HEK293 (cell line): ENCODE measurements at regions of chr9 and their contacts with region 1.

Region 1: GRCh38 chr9:70111042-70111602 is 67.5 kb downstream of the MAMDC2 start:
- H3K4me3 ChIP-seq: no peak overlapping the region
- H3K27ac ChIP-seq: no peak overlapping the region
- H3K4me1 ChIP-seq: no peaks in the 10 kb centered on the region
- CTCF ChIP-seq: peak; percentile 48; the same call in 1 of the 2 replicates

Region 2: DNA sequence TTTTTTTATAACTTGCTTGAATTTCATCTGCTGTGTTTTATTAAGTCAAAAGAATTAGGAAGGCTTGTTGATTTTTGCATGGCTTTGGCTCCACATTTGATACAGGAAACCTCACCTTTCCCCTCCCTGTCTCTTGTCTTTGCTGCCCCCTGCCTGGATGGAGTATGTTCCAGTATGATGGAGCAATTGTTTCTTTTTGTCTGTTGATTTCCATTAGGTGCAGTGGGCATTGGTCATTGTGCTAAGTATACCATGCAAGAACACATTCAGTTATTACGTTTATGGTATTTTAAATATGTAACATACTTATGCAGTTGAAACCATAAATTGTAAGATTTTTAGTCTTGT is 917.5 kb before region 1 on chr9:
- CTCF ChIA-PET with region 1: no interaction called
- POLR2A ChIA-PET with region 1: no interaction called
- H3K4me3 ChIP-seq: no peak overlapping the region
- H3K27ac ChIP-seq: no peak overlapping the region
- H3K4me1 ChIP-seq: no peaks in the 10 kb centered on the region
- CTCF ChIP-seq: no peak

Region 3: DNA sequence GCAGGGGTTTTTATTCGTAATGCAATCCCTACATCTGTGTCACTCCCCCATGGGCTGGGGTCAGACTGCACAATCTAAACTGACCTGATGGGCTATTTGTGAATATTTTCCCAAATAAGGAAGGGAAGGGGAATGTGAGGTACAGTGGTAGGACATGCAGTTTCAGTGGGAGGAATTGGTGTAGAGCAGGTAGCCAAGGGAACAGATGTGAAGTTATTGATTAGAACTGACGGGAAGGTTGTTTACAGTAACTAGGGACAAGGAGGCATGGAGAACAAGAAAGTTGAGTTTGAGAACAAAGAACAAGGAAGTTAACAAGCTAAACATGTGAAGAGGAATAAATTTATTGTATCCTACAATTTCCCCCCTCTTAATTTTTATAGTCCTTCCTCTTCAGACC is 185.7 kb before region 1 on chr9:
- CTCF ChIA-PET with region 1: interaction called, 22 read pairs
- POLR2A ChIA-PET with region 1: no interaction called
- H3K4me3 ChIP-seq: no peak overlapping the region
- H3K27ac ChIP-seq: no peak overlapping the region
- H3K4me1 ChIP-seq: no peaks in the 10 kb centered on the region
- CTCF ChIP-seq: no peak

Region 4: DNA sequence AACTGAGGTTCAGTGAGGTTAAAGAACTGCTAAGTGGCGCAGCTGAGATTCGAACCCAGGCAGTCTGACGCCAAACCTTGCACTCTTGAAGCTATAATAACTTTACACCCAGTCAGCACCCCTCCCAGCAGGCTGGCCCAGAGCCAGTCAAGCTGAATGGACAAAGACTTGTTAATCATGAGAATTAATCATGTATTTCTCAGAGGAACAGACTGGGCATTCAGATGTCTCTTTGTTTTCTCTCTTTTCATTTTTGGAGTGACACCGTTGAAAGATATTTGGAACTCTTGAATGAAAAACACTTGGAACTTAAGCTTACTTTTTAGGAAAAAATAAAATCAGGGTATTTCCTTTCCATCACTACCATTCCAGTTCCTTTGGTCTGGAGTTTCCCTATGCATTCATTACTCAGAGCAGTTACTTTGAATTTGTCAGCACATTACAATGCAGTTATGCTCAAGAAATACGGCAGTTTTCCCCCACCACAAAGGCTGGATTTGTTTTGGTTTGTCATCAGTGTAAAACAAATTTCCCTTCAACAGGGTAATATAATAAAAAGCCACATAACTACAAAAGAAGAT is 90.0 kb before region 1 on chr9:
- CTCF ChIA-PET with region 1: interaction called, 11 read pairs
- POLR2A ChIA-PET with region 1: no interaction called
- H3K4me3 ChIP-seq: no peak overlapping the region
- H3K27ac ChIP-seq: no peak overlapping the region
- H3K4me1 ChIP-seq: no peaks in the 10 kb centered on the region
- CTCF ChIP-seq: no peak

Region 5: GRCh38 chr9:70093944-70094343 is 17.2 kb before region 1 on chr9:
- CTCF ChIA-PET with region 1: interaction called, 121 read pairs
- POLR2A ChIA-PET with region 1: no interaction called
- H3K4me3 ChIP-seq: no peak overlapping the region
- H3K27ac ChIP-seq: no peak overlapping the region
- H3K4me1 ChIP-seq: peaks cover 3% of the 10 kb centered on the region; the same call in 1 of the 2 replicates
- CTCF ChIP-seq: no peak

Region 6: DNA sequence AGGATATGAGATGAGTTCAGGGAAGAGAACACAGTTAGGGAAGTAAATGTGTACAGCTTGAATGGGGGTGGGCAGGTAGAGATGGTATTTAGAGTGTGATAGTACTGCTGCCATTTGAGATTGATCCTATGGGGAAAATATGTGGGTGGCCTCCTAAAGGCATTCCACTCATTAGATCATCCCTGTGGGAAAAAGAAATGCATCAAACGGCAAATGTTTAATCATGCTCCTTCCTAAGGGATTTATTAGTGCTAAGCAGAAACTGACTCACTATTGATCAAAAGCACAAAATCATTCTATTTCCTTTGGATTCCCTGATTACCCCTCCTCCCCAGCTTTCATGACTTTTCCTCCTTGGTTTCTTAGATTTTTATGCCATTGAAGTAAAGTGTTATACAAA is 111.2 kb after region 1 on chr9:
- CTCF ChIA-PET with region 1: interaction called, 58 read pairs
- POLR2A ChIA-PET with region 1: no interaction called
- H3K4me3 ChIP-seq: no peak overlapping the region
- H3K27ac ChIP-seq: no peak overlapping the region
- H3K4me1 ChIP-seq: no peaks in the 10 kb centered on the region
- CTCF ChIP-seq: no peak